ENCODE measurements at regions of chr2 and their contacts with region 1.

Region 1: DNA sequence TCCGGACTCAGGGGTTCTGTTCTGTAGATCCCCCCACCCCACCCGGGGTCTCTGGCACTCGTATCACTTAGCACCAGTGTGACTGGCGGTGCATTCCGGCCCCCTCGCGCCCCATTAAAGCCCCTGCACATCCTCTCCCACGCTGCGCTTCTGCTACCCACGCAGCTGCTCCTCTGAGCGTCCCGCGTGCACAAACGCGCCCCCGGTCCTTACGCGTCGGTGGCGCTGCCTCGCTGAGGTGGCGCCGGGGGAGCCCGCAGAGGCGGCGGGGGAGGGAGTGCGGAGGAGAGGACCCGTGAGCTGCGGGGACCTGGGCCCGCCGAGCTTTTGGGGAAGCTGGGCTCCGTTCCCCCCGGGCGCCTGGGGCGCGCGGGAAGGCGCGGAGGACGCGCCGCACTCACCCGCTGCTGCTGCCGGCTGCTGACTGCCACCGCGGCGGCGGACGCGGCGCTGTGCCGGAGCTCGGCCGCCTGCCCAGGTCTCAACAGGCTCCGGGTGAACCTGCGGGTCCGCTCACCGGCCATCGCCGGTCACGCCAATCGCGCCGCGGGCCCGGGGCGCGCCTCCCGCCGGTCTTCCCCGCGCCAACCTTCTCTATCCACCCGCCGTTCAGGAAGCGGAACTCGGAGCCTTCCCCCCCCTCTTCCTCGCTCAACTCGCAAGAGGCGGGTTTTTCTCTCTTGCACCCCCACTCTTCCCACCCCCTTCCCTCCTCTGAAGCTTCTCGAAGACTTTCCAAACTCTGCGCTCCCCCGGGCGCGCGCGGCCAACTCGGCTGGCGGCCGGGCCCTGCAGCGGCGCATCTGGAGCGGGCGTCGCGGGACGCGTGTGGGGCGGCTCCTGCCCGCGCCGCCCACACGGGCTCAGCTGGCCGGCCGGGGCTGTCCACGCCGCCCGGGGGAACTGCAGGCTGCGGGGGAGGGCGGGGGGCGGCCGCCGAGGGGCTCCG is at the start of gene DOCK10:
- DNase-seq: peak; percentile 67
- H3K4me3 Mint-ChIP-seq: peak within 1 kb of the TSS; percentile 88
- H3K27ac Mint-ChIP-seq: peak within 1 kb of the TSS; percentile 96
- H3K4me1 Mint-ChIP-seq: peaks cover 44% of the 10 kb centered on the region
- H3K27me3 Mint-ChIP-seq: no peaks in the 10 kb centered on the region
- total RNA-seq, gene DOCK10: 134 to 139 TPM

Region 2: GRCh38 chr2:224885836-224886547 is 156.1 kb before region 1 on chr2:
- CTCF ChIA-PET with region 1: no interaction called
- POLR2A ChIA-PET with region 1: no interaction called
- intact Hi-C with region 1: loop called (anchors 1 kb)
- DNase-seq: peak; percentile 15
- H3K4me3 Mint-ChIP-seq: no peak overlapping the region
- H3K27ac Mint-ChIP-seq: peak overlapping the region; percentile 82
- H3K4me1 Mint-ChIP-seq: peaks cover 72% of the 10 kb centered on the region
- H3K27me3 Mint-ChIP-seq: no peaks in the 10 kb centered on the region

Region 3: GRCh38 chr2:224946895-224947294 is 95.2 kb before region 1 on chr2:
- CTCF ChIA-PET with region 1: no interaction called
- POLR2A ChIA-PET with region 1: interaction called, 15 read pairs
- intact Hi-C with region 1: no loop called
- DNase-seq: no peak
- H3K4me3 Mint-ChIP-seq: peak overlapping the region; percentile 90
- H3K27ac Mint-ChIP-seq: peak overlapping the region; percentile 95
- H3K4me1 Mint-ChIP-seq: peaks cover 65% of the 10 kb centered on the region
- H3K27me3 Mint-ChIP-seq: no peaks in the 10 kb centered on the region

Region 4: GRCh38 chr2:225027061-225027762 is 14.9 kb before region 1 on chr2:
- CTCF ChIA-PET with region 1: no interaction called
- POLR2A ChIA-PET with region 1: interaction called, 4 read pairs
- intact Hi-C with region 1: loop called (anchors 1 kb)
- DNase-seq: peak; percentile 56
- H3K4me3 Mint-ChIP-seq: no peak overlapping the region
- H3K27ac Mint-ChIP-seq: peak overlapping the region; percentile 76
- H3K4me1 Mint-ChIP-seq: peaks cover 79% of the 10 kb centered on the region
- H3K27me3 Mint-ChIP-seq: no peaks in the 10 kb centered on the region

Region 5: GRCh38 chr2:225065882-225066281 is 23.8 kb after region 1 on chr2:
- CTCF ChIA-PET with region 1: interaction called, 3 read pairs
- POLR2A ChIA-PET with region 1: interaction called, 10 read pairs
- intact Hi-C with region 1: no loop called
- DNase-seq: no peak
- H3K4me3 Mint-ChIP-seq: no peak overlapping the region
- H3K27ac Mint-ChIP-seq: no peak overlapping the region
- H3K4me1 Mint-ChIP-seq: peaks cover 40% of the 10 kb centered on the region
- H3K27me3 Mint-ChIP-seq: no peaks in the 10 kb centered on the region

Region 6: DNA sequence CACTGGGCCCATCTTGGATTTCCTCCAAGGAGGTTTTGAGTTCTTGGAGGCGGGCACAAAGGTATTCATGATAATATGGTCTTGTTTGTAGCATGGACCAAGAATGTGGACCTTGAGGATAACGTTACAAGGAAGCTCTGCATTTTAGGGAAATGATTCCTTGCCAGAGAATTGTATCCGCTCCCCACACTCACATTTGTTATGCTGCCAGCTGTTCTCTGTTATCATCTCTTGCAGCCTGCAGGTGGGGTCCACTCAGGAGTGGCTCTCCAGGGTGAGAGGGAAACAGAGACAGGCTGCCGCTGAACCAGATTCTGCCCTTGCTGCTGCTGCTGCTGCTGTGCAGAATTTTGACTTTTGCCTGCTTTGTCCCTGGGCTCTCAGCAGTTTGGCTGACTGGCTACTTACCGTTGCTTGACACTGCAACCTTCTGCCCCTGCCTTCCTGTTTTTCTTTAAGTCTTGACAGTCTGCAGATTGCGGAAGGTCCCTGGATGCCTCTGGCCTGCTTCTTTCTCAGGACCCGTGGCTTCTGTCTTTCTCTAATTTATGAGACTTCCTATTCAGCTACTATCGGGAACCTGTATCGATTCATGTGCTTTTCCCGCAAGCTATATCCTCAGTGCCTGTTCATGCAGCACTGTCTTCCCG is 122.4 kb after region 1 on chr2:
- CTCF ChIA-PET with region 1: no interaction called
- POLR2A ChIA-PET with region 1: no interaction called
- intact Hi-C with region 1: no loop called
- DNase-seq: no peak
- H3K4me3 Mint-ChIP-seq: no peak overlapping the region
- H3K27ac Mint-ChIP-seq: no peak overlapping the region
- H3K4me1 Mint-ChIP-seq: peaks cover 3% of the 10 kb centered on the region
- H3K27me3 Mint-ChIP-seq: no peaks in the 10 kb centered on the region